Activated CD4-positive, alpha-beta T cell treated with anti-CD3 and anti-CD28 coated beads for 36 hours (primary cell): ENCODE measurements at regions of chr6 and their contacts with region 1.

Region 1: DNA sequence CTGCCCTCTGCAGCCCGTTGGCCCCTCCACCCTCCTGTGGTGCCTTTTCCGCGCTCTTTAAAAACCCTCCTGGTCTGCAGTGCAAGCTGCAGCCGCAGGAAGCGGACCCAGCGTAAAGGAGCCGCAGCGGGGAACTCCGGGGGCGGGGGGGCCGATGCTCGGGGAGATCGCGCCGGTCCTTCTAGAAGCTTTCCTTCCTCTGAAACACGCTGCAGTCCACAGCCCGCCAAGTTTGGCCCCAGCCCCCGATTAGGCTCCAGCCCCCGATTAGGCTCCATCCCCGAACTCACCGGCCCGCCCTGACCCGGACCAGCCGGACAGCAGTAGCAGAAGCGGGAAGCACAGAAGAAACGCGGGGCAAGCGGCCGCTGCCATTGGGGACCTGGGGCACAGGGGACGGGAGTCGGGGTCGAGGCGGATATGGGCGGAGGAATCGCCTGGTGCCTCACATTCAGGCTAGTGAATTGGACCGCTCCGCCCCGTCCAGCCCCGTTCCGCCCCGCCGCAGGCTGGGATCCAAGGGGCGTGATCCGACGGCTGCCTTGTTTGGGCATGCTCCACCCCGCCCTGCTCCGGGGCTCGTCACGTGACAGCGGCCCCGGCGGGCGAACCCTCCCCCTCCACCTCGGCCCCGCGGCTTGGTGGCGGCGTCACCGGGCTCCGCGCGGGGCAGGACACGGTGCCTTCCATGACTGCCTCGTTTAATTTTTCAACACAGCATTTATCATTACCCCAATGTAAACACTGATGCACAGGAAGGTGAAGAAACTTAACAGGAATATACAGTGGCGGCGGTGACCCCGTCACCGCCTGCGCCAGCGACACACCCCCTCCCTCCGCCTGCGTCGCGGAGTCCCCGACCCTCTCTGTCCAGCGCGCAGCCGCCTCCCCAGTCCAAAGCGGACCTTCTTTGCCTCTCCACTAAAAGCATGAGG is 20.3 kb downstream of the RAET1L start:
- DNase-seq: peak; percentile 93
- ATAC-seq: peak; percentile 74
- H3K4me3 Mint-ChIP-seq: peak overlapping the region; percentile 75
- H3K27ac Mint-ChIP-seq: no peak overlapping the region
- H3K4me1 Mint-ChIP-seq: peaks cover 59% of the 10 kb centered on the region
- H3K27me3 Mint-ChIP-seq: peaks cover 30% of the 10 kb centered on the region

Region 2: DNA sequence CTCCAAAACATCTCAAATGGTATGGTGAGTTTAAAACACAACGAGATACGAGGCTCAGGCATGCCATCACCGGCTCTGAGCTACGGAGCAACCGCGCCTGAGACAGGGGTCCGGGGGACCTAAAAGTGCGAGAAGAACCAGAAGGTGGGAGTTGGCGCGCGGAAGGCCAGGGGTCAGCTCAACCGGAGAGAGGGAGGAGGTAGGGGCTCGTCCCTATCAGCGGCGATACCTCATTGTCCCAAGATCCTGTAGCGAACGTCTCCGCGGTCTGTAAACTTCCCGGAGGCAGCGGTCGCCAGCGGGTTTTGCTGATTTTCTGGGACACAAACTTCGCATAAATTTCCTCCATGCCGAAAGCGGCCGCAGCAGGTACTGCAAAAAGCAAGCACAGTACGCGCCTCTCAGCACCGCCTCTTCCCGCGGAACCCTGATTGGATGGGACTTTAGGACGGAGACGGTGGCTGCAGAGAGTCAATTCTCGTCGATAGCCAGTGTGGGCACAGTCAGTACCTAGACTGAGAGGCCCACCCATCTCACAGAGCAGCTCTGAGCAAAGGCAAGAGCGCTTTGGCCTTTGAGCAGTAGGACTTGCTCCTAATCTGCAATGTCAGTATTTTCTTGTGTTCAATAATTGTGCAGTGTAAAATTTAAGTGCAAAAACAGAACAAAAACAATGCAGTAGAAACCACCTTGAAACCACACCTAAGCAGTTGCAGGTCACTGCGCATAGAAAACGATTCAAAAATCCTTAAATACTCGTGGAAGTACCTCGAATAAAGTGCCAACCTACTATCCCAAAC is 258.7 kb before region 1 on chr6 and contains the start of gene NUP43:
- CTCF ChIA-PET with region 1: no interaction called
- POLR2A ChIA-PET with region 1: no interaction called
- intact Hi-C with region 1: loop called in 1 of 2 experiments (anchors 2 kb)
- DNase-seq: peak; percentile 96
- ATAC-seq: peak; percentile 67
- H3K4me3 Mint-ChIP-seq: peak within 1 kb of the TSS; percentile 98
- H3K27ac Mint-ChIP-seq: peak within 1 kb of the TSS; percentile 96
- H3K4me1 Mint-ChIP-seq: peaks cover 27% of the 10 kb centered on the region
- H3K27me3 Mint-ChIP-seq: no peaks in the 10 kb centered on the region
- total RNA-seq, gene NUP43: 80.5 to 89.4 TPM

Region 3: DNA sequence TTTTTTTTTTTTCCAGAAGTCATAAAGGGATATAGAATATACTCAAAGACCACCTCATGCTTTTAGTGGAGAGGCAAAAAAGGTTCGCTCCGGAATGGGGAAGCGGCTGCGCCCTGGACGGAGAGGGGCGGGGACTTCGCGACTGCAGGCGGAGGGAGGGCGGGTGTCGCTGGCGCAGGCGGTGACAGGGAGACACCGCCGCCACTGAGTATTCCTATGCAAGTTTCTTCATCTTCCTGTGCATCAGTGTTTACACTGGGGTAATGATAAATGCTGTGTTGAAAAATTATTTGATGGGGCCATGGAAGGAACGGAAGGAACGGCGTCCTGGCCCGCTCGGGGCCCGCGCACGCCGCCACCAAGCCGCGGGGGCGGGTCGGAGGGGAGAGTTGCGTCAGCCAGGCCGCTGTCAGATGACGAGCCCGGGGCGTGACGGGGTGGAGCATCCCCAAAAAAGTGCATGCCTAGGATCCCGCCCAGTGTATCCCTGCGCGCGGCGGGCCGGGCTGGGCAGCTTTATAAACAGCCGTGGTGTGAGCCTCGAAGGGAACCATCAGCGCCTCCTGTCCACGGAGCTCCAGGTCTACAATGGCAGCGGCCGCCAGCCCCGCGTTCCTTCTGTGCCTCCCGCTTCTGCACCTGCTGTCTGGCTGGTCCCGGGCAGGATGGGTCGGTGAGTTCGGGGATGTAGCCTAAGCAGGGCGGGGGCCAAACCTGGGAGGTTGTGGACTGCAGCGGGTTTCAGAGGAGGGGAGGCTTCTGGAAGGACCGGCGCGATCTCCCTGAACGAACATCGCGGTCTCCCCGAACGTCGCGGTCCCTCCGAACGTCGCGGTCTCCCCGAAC is 41.4 kb before region 1 on chr6 and contains the start of gene ULBP1:
- CTCF ChIA-PET with region 1: interaction called, 4 read pairs
- POLR2A ChIA-PET with region 1: no interaction called
- intact Hi-C with region 1: loop called (anchors 1 to 2 kb)
- DNase-seq: peak; percentile 93
- ATAC-seq: peak; percentile 76
- H3K4me3 Mint-ChIP-seq: peak within 1 kb of the TSS; percentile 77
- H3K27ac Mint-ChIP-seq: peak within 1 kb of the TSS; percentile 91
- H3K4me1 Mint-ChIP-seq: peaks cover 22% of the 10 kb centered on the region
- H3K27me3 Mint-ChIP-seq: peaks cover 69% of the 10 kb centered on the region
- total RNA-seq, gene ULBP1: 2.7 to 5.0 TPM

Region 4: DNA sequence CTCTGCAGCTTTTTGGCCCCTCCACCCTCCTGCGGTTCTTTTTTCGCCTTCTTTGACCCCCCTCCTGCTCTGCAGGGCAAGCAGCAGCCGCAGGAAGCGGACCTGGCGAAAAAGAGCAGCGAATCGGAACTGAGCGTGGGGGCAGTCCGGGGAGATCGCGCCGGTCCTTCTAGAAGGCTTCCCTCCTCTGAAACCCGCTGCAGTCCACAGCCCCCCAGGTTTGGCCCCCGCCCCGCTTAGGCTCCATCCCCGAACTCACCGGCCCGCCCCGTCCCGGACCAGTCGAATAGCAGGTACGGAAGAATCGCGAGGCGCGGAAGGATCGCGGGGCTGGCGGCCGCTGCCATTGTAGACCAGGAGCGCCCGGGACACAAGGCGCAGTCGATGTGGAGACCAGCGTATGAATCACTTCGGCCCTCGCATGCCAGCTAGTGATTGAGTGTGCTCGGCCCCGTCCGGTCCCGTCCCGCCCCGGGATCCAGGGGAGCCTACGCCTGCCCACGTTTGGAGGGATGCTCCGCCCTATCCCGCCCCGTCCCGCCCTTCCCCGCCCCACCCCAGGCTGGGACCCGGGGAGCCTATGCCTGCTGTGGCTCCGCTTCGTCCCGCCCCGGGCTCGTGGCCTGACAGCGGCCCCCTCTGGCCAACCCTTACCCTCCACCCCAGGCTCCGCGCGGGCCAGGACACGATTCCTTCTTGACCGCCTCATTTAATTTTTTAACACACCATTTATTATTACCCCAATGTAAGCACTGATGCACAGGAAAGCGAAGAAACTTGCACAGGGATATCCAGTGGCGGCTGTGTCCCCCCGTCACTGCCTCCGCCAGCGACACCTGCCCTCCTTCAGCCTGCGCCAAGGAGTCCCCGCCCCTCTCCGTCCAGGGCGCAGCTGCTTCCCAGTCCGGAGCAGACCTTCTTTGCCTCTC is 63.9 kb after region 1 on chr6 and contains the start of gene ULBP3:
- CTCF ChIA-PET with region 1: no interaction called
- POLR2A ChIA-PET with region 1: no interaction called
- intact Hi-C with region 1: loop called in 1 of 2 experiments (anchors 2 kb)
- DNase-seq: peak; percentile 88
- ATAC-seq: peak; percentile 85
- H3K4me3 Mint-ChIP-seq: peak within 1 kb of the TSS; percentile 60
- H3K27ac Mint-ChIP-seq: no peak within 1 kb of the TSS
- H3K4me1 Mint-ChIP-seq: peaks cover 9% of the 10 kb centered on the region
- H3K27me3 Mint-ChIP-seq: peaks cover 14% of the 10 kb centered on the region
- total RNA-seq, gene ULBP3: 0.46 to 0.77 TPM

Region 5: GRCh38 chr6:150600301-150601017 is 595.4 kb after region 1 on chr6:
- CTCF ChIA-PET with region 1: interaction called, 3 read pairs
- POLR2A ChIA-PET with region 1: no interaction called
- intact Hi-C with region 1: loop called in 1 of 2 experiments (anchors 10 kb)
- DNase-seq: peak; percentile 90
- ATAC-seq: peak; percentile 65
- H3K4me3 Mint-ChIP-seq: peak overlapping the region; percentile 80
- H3K27ac Mint-ChIP-seq: peak overlapping the region; percentile 88
- H3K4me1 Mint-ChIP-seq: peaks cover 23% of the 10 kb centered on the region
- H3K27me3 Mint-ChIP-seq: peaks cover 24% of the 10 kb centered on the region